ENCODE measurements at regions of chr1 and their contacts with region 1.

Region 1: DNA sequence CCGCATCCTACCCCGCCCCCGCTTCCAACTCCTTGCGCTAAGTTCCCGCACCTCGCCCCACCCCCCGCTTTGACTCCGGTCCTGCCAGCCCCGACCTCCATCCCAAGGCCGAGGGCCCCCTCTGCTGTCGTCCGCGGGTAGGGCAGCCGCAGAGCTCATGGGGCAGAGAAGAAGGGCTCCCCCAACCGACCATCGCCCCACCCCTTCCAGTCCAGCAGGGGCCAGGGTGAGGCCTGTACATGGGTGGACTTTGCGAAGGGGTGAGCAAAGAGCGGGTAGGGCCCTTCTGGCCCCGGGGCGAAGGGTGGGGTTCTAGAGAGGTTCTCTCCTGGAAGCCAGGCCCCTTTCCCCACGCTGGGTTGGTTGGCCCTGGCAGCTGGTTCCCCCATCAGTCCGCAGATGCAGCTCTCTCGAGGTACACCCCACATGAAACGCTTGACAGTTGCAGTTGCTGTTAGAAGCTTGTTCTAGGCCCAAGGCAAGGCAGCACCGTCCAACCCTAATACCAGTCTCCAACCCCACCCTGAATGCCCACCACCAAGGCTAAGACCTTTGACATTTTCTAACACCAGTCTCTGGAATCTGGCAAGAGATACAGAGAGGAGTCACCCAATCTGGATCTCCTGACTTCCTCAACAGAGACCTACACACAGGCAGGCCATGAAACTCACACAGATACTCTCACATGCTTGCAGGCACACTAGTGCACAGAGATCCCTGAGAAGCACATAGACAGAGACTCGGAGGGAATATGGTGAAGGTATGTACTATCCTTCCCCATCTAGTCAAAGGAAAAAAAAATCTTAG is 25.3 kb upstream of the ADGRB2 start:
- DNase-seq: peak; percentile 92 to 98 (median 96)
- ATAC-seq: peak; percentile 81
- H3K4me3 ChIP-seq: peak overlapping the region; percentile 68 to 71
- H3K4me3 Mint-ChIP-seq: peak overlapping the region; percentile 91
- H3K27ac ChIP-seq: no peak overlapping the region
- H3K27ac Mint-ChIP-seq: no peak overlapping the region
- H3K4me1 ChIP-seq: peaks cover 11% of the 10 kb centered on the region
- H3K4me1 Mint-ChIP-seq: peaks cover 15% of the 10 kb centered on the region
- H3K27me3 ChIP-seq: no peaks in the 10 kb centered on the region
- H3K27me3 Mint-ChIP-seq: no peaks in the 10 kb centered on the region
- CTCF ChIP-seq: peak; percentile 67

Region 2: GRCh38 chr1:31381394-31382287 is 407.8 kb before region 1 on chr1:
- CTCF ChIA-PET with region 1: no interaction called
- POLR2A ChIA-PET with region 1: no interaction called
- intact Hi-C with region 1: no loop called
- DNase-seq: no peak
- ATAC-seq: no peak
- H3K4me3 ChIP-seq: no peak overlapping the region
- H3K4me3 Mint-ChIP-seq: no peak overlapping the region
- H3K27ac ChIP-seq: no peak overlapping the region
- H3K27ac Mint-ChIP-seq: no peak overlapping the region
- H3K4me1 ChIP-seq: no peaks in the 10 kb centered on the region
- H3K4me1 Mint-ChIP-seq: no peaks in the 10 kb centered on the region
- H3K27me3 ChIP-seq: peaks cover 0 to 3% of the 10 kb centered on the region in 2 experiments
- H3K27me3 Mint-ChIP-seq: peaks cover 26% of the 10 kb centered on the region
- CTCF ChIP-seq: no peak

Region 3: DNA sequence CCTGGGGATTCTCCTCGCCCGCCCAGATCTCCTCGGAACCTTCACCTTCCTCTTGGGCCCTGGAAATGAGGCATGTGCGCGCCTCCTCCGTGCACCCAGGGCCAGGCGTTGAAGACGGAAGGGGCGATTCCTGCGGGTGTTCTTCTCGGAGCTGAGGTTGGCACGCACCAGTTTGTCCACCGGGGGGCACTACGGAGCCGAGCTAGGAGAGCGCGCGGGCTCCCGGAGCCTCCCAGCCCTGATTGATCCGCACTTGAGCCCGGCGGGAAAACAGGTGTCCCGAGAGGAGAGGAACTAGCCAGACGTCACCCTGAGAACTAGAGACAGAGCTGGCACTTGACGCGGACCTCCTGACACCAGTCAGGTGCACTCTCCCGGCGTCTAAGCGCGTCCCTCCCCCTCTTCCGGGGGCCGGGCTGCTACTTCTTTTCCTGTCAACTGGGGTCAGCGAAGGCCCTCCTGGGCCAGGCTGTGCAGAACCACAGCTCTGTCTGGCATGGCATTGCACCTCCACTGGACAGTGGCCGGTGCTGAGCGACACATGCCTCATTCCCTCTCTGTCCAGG is 394.8 kb before region 1 on chr1:
- CTCF ChIA-PET with region 1: no interaction called
- POLR2A ChIA-PET with region 1: no interaction called
- intact Hi-C with region 1: loop called in 1 of 2 experiments (anchors 2 kb)
- DNase-seq: peak; percentile 58 to 86 (median 78)
- ATAC-seq: peak; percentile 94
- H3K4me3 ChIP-seq: peak overlapping the region; percentile 64 to 78
- H3K4me3 Mint-ChIP-seq: peak overlapping the region; percentile 86
- H3K27ac ChIP-seq: no peak overlapping the region
- H3K27ac Mint-ChIP-seq: no peak overlapping the region
- H3K4me1 ChIP-seq: peaks cover 8% of the 10 kb centered on the region
- H3K4me1 Mint-ChIP-seq: peaks cover 12% of the 10 kb centered on the region
- H3K27me3 ChIP-seq: no peaks in the 10 kb centered on the region
- H3K27me3 Mint-ChIP-seq: no peaks in the 10 kb centered on the region
- CTCF ChIP-seq: peak; percentile 70

Region 4: GRCh38 chr1:31644560-31645273 is 144.7 kb before region 1 on chr1 and contains the start of gene PEF1:
- CTCF ChIA-PET with region 1: interaction called, 3 read pairs
- POLR2A ChIA-PET with region 1: no interaction called
- intact Hi-C with region 1: loop called (anchors 1 kb)
- DNase-seq: peak; percentile 99 to 100 (median 99)
- ATAC-seq: peak; percentile 91
- H3K4me3 ChIP-seq: peak within 1 kb of the TSS; percentile 92 to 97
- H3K4me3 Mint-ChIP-seq: peak within 1 kb of the TSS; percentile 100
- H3K27ac ChIP-seq: peak within 1 kb of the TSS; percentile 99
- H3K27ac Mint-ChIP-seq: peak within 1 kb of the TSS; percentile 100
- H3K4me1 ChIP-seq: peaks cover 30% of the 10 kb centered on the region
- H3K4me1 Mint-ChIP-seq: peaks cover 40% of the 10 kb centered on the region
- H3K27me3 ChIP-seq: no peaks in the 10 kb centered on the region
- H3K27me3 Mint-ChIP-seq: no peaks in the 10 kb centered on the region
- CTCF ChIP-seq: no peak
- total RNA-seq, gene PEF1: 35.8 to 36.6 TPM

Region 5: GRCh38 chr1:31715087-31715872 is 74.2 kb before region 1 on chr1:
- CTCF ChIA-PET with region 1: interaction called, 20 read pairs
- POLR2A ChIA-PET with region 1: no interaction called
- intact Hi-C with region 1: loop called (anchors 1 to 2 kb)
- DNase-seq: peak in 5 of 9 experiments; percentile 21 to 50 (median 33)
- ATAC-seq: peak; percentile 64
- H3K4me3 ChIP-seq: peak overlapping the region; percentile 15 to 30
- H3K4me3 Mint-ChIP-seq: peak overlapping the region; percentile 71
- H3K27ac ChIP-seq: no peak overlapping the region
- H3K27ac Mint-ChIP-seq: no peak overlapping the region
- H3K4me1 ChIP-seq: peaks cover 19% of the 10 kb centered on the region
- H3K4me1 Mint-ChIP-seq: peaks cover 11% of the 10 kb centered on the region
- H3K27me3 ChIP-seq: peaks cover 12 to 18% of the 10 kb centered on the region in 2 experiments
- H3K27me3 Mint-ChIP-seq: peaks cover 60% of the 10 kb centered on the region
- CTCF ChIP-seq: peak; percentile 32

Region 6: DNA sequence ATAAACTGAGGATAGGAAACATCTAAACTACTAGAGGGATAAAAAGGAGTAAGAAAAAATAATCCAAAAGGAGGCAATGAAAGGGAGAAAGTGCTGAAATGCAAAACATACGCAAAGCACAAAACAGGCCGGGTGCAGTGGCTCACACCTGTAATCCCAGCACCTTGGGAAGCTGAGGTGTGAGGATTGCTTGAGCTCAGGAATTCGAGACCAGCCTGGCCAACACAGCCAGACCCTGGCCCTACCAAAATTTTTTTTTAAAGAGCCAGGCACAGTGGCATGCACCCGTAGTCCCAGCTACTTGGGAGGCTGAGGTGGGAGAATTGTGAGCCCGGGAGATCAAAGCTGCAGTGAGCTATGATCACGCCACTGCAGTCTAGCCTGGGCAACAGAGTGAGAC is 15.9 kb after region 1 on chr1:
- CTCF ChIA-PET with region 1: interaction called, 25 read pairs
- POLR2A ChIA-PET with region 1: interaction called, 3 read pairs
- intact Hi-C with region 1: no loop called
- DNase-seq: peak in 1 of 9 experiments; percentile 11
- ATAC-seq: no peak
- H3K4me3 ChIP-seq: no peak overlapping the region
- H3K4me3 Mint-ChIP-seq: no peak overlapping the region
- H3K27ac ChIP-seq: no peak overlapping the region
- H3K27ac Mint-ChIP-seq: no peak overlapping the region
- H3K4me1 ChIP-seq: no peaks in the 10 kb centered on the region
- H3K4me1 Mint-ChIP-seq: peaks cover 12% of the 10 kb centered on the region
- H3K27me3 ChIP-seq: no peaks in the 10 kb centered on the region
- H3K27me3 Mint-ChIP-seq: no peaks in the 10 kb centered on the region
- CTCF ChIP-seq: no peak

Region 7: DNA sequence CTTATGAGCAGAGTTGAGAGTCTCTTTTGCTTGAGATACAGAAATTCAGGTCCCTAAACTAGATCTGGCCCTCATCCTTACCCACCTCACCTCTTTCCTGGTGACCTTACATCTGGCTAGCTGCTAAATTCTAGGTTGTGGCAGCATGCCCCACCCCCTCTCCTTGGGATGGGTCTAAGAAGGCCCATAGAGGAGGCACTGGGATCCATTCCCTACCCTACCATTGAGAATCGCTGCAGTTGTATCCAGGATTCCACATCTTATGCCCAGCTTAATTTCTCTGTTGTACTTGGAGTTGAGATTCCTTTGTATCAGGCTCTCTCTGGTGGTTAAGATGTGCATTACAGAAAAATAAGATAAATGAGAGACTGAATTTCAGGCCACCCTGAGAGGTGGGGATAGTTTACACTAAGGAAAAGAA is 273.8 kb after region 1 on chr1:
- CTCF ChIA-PET with region 1: interaction called, 4 read pairs
- POLR2A ChIA-PET with region 1: no interaction called
- intact Hi-C with region 1: loop called in 1 of 2 experiments (anchors 2 kb)
- DNase-seq: peak in 2 of 9 experiments; percentile 45 to 58
- ATAC-seq: peak; percentile 71
- H3K4me3 ChIP-seq: no peak overlapping the region
- H3K4me3 Mint-ChIP-seq: no peak overlapping the region
- H3K27ac ChIP-seq: no peak overlapping the region
- H3K27ac Mint-ChIP-seq: peak overlapping the region; percentile 0
- H3K4me1 ChIP-seq: peaks cover 12% of the 10 kb centered on the region
- H3K4me1 Mint-ChIP-seq: peaks cover 13% of the 10 kb centered on the region
- H3K27me3 ChIP-seq: no peaks in the 10 kb centered on the region
- H3K27me3 Mint-ChIP-seq: no peaks in the 10 kb centered on the region
- CTCF ChIP-seq: peak; percentile 63